ENCODE measurements at regions of chr17 and their contacts with region 1.

Region 1: DNA sequence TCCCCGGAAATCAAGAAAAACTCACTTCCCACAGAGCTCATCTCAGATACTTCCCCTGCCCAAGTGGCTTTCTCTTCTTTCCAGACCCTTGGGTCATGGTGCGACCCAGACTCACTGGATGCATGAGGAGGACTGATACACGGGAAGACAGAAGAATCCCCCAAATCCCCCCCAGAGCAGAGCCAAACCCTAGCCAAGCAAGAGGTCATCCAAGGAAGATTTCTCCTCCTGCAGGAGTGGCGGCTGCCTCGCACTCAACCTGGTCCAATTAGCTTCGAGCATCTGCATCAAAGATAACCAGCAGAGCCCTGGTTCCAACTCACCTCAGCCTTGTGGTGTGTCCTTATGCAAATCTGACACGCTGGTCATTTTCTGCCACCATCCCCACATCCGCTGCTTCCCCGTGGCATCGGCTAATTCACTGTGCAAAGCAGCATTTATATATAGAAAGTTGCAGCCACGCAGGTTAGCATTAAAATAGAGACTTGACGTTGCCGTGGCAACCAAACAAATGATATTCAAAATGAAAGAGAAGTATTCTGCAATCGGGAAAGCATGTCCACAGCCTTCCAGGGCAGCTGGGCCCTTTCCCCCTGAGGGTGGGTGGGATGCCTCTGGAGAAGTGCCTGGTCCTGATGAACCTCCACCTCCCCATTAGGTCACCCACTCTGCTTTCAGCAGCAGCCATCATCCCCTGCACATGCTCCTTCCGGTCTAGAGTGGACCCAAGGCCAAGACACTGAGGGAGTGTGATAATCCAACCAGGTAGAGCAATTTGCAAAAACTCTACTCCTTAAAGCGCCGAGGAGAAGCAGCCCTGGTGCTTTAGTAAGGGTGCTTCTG is 138.8 kb downstream of the GAS7 start:
- DNase-seq: peak; percentile 60 to 70 (median 62)
- H3K4me3 ChIP-seq: peak overlapping the region in 1 of 3 experiments; percentile 14
- H3K4me3 Mint-ChIP-seq: peak overlapping the region in 1 of 2 donors; percentile 48
- H3K27ac ChIP-seq: peak overlapping the region in 1 of 2 donors; percentile 59
- H3K27ac Mint-ChIP-seq: peak overlapping the region; percentile 46 to 99 (median 92)
- H3K4me1 ChIP-seq: peaks cover 55 to 60% of the 10 kb centered on the region in 2 donors
- H3K4me1 Mint-ChIP-seq: peaks cover 64% of the 10 kb centered on the region
- H3K27me3 ChIP-seq: no peaks in the 10 kb centered on the region
- H3K27me3 Mint-ChIP-seq: peaks cover 0 to 13% (median 3%) of the 10 kb centered on the region in 3 donors
- CTCF ChIP-seq: no peak

Region 2: GRCh38 chr17:9982159-9982558 is 77.4 kb before region 1 on chr17:
- intact Hi-C with region 1: loop called in 1 of 2 experiments (anchors 5 kb)
- DNase-seq: peak in 1 of 3 donors; percentile 22
- H3K4me3 ChIP-seq: no peak overlapping the region
- H3K4me3 Mint-ChIP-seq: no peak overlapping the region
- H3K27ac ChIP-seq: peak overlapping the region in 1 of 2 donors; percentile 40
- H3K27ac Mint-ChIP-seq: peak overlapping the region; percentile 36 to 88 (median 58)
- H3K4me1 ChIP-seq: peaks cover 35 to 36% of the 10 kb centered on the region in 2 donors
- H3K4me1 Mint-ChIP-seq: peaks cover 58% of the 10 kb centered on the region
- H3K27me3 ChIP-seq: no peaks in the 10 kb centered on the region
- H3K27me3 Mint-ChIP-seq: peaks cover 0 to 2% (median 1%) of the 10 kb centered on the region in 3 donors
- CTCF ChIP-seq: peak; percentile 16

Region 3: DNA sequence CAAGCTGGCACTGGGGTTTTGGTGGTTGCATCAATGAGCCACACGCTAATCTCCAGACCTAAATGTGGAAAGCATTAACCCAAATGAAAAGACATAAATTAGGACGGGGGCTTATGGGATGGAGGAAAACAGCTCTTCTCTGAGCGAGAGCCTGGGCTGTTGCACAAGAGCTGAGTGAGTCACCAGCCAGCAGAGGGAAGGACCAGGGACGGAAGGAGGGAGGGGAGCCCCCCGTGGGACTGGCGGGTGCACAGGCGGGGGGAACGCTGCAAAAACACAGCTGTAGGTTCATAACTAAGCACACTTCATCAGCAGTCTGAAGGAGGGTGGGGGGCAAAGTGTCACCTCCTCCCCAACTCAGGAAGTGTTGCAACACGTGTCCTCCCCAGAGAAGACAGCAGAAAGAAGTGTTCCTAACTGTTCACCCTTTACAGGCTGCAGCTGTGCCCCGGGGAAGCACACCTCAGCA is 55.5 kb after region 1 on chr17:
- intact Hi-C with region 1: loop called (anchors 2 to 10 kb)
- DNase-seq: peak; percentile 94 to 98 (median 96)
- H3K4me3 ChIP-seq: peak overlapping the region; percentile 1 to 62 (median 27)
- H3K4me3 Mint-ChIP-seq: peak overlapping the region; percentile 75 to 89
- H3K27ac ChIP-seq: peak overlapping the region; percentile 98 to 99
- H3K27ac Mint-ChIP-seq: peak overlapping the region; percentile 99 to 100 (median 100)
- H3K4me1 ChIP-seq: peaks cover 74 to 82% of the 10 kb centered on the region in 2 donors
- H3K4me1 Mint-ChIP-seq: peaks cover 85% of the 10 kb centered on the region
- H3K27me3 ChIP-seq: no peaks in the 10 kb centered on the region
- H3K27me3 Mint-ChIP-seq: peaks cover 0 to 9% (median 2%) of the 10 kb centered on the region in 3 donors
- CTCF ChIP-seq: no peak

Region 4: GRCh38 chr17:10156948-10157607 is 97.5 kb after region 1 on chr17:
- intact Hi-C with region 1: loop called in 1 of 2 experiments (anchors 5 kb)
- DNase-seq: peak; percentile 93 to 97 (median 96)
- H3K4me3 ChIP-seq: peak overlapping the region in 1 of 3 experiments; percentile 41
- H3K4me3 Mint-ChIP-seq: peak overlapping the region; percentile 51 to 76
- H3K27ac ChIP-seq: peak overlapping the region; percentile 97 to 99
- H3K27ac Mint-ChIP-seq: peak overlapping the region; percentile 97 to 99 (median 98)
- H3K4me1 ChIP-seq: peaks cover 62 to 65% of the 10 kb centered on the region in 2 donors
- H3K4me1 Mint-ChIP-seq: peaks cover 56% of the 10 kb centered on the region
- H3K27me3 ChIP-seq: no peaks in the 10 kb centered on the region
- H3K27me3 Mint-ChIP-seq: peaks cover 0 to 3% (median 1%) of the 10 kb centered on the region in 3 donors
- CTCF ChIP-seq: no peak

Region 5: DNA sequence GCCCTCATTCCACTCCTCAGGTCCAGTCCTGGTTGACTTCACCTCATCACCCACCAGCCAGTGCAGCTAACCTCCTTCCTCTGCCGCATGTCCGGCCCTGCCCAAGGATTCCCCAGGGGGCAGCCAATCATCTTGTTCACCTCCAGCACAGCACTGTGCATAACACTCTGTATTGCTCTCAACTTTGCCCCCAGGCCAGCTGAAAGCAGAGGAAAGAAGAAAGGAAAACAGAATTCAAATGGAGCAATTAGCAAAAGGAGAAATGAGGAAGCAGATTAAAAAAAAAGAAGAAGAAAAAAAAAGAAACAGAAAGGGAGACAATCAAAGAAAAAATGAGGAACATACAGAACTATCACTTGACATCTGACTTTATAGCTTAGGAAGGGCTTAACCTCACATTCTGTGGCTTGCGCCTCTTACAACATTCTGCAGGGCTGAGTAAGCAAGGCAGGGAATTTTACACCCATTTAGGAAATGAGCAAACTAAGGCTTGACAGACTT is 112.7 kb after region 1 on chr17:
- intact Hi-C with region 1: loop called in 1 of 2 experiments (anchors 1 kb)
- DNase-seq: peak; percentile 85 to 96 (median 96)
- H3K4me3 ChIP-seq: peak overlapping the region in 1 of 3 experiments; percentile 65
- H3K4me3 Mint-ChIP-seq: peak overlapping the region; percentile 76 to 89
- H3K27ac ChIP-seq: peak overlapping the region; percentile 89 to 92
- H3K27ac Mint-ChIP-seq: peak overlapping the region; percentile 96 to 100 (median 99)
- H3K4me1 ChIP-seq: peaks cover 55 to 71% of the 10 kb centered on the region in 2 donors
- H3K4me1 Mint-ChIP-seq: peaks cover 86% of the 10 kb centered on the region
- H3K27me3 ChIP-seq: no peaks in the 10 kb centered on the region
- H3K27me3 Mint-ChIP-seq: peaks cover 0 to 4% (median 0%) of the 10 kb centered on the region in 3 donors
- CTCF ChIP-seq: no peak